Heart right ventricle (tissue), 16 donors: ENCODE measurements at regions of chr2 and their contacts with region 1.

Region 1: GRCh38 chr2:68943581-68944568 is 8.8 kb downstream of the GKN2 start:
- DNase-seq: peak; percentile 15 to 58
- ATAC-seq: peak; percentile 16 to 80 (median 74)
- H3K4me3 ChIP-seq: no peak overlapping the region
- H3K27ac ChIP-seq: no peak overlapping the region
- H3K4me1 ChIP-seq: peaks cover 0 to 10% (median 0%) of the 10 kb centered on the region in 9 donors
- H3K27me3 ChIP-seq: peaks cover 0 to 10% (median 3%) of the 10 kb centered on the region in 7 donors
- CTCF ChIP-seq: peak; percentile 63 to 88 (median 84)

Region 2: GRCh38 chr2:68548396-68548795 is 395.5 kb before region 1 on chr2:
- intact Hi-C with region 1: no loop called
- DNase-seq: no peak
- ATAC-seq: no peak
- H3K4me3 ChIP-seq: no peak overlapping the region
- H3K27ac ChIP-seq: no peak overlapping the region
- H3K4me1 ChIP-seq: no peaks in the 10 kb centered on the region
- H3K27me3 ChIP-seq: no peaks in the 10 kb centered on the region
- CTCF ChIP-seq: no peak

Region 3: GRCh38 chr2:69012310-69013141 is 68.7 kb after region 1 on chr2:
- intact Hi-C with region 1: loop called in 1 of 10 experiments (anchors 5 kb)
- DNase-seq: peak; percentile 74 to 75
- ATAC-seq: peak; percentile 66 to 78 (median 74)
- H3K4me3 ChIP-seq: peak overlapping the region; percentile 53 to 89 (median 74)
- H3K27ac ChIP-seq: peak overlapping the region in 8 of 10 donors; percentile 56 to 86 (median 79)
- H3K4me1 ChIP-seq: peaks cover 0 to 32% (median 21%) of the 10 kb centered on the region in 9 donors
- H3K27me3 ChIP-seq: peaks cover 0 to 61% (median 38%) of the 10 kb centered on the region in 7 donors
- CTCF ChIP-seq: peak; percentile 56 to 83 (median 72)

Region 4: DNA sequence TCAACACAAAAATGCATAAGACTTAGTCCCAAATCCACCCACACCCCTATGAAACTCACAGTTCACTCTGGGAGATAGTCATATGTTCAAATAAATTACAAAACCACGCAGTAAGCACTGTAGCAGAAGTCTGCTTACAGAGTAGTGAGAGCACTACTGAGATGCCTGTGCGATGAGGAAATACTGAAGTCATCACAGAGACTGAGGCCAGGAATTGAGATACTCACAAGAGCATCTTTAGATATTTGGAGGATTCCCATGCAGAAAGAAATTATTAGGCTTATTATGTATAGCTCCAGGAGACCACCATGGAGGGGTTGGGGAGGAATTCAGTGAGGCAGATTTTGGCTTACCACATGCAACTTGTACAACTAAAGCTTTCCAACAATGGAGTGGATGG is 151.4 kb after region 1 on chr2:
- intact Hi-C with region 1: loop called in 1 of 10 experiments (anchors 10 kb)
- DNase-seq: peak in 1 of 2 donors; percentile 25
- ATAC-seq: peak in 7 of 8 donors; percentile 58 to 87 (median 80)
- H3K4me3 ChIP-seq: no peak overlapping the region
- H3K27ac ChIP-seq: peak overlapping the region in 5 of 10 donors; percentile 18 to 64 (median 30)
- H3K4me1 ChIP-seq: peaks cover 0 to 66% (median 18%) of the 10 kb centered on the region in 9 donors
- H3K27me3 ChIP-seq: no peaks in the 10 kb centered on the region
- CTCF ChIP-seq: no peak

Region 5: GRCh38 chr2:69138793-69139510 is 195.1 kb after region 1 on chr2:
- intact Hi-C with region 1: no loop called
- DNase-seq: no peak
- ATAC-seq: peak in 5 of 8 donors; percentile 33 to 77 (median 38)
- H3K4me3 ChIP-seq: no peak overlapping the region
- H3K27ac ChIP-seq: peak overlapping the region in 1 of 10 donors; percentile 41
- H3K4me1 ChIP-seq: peaks cover 0 to 16% (median 3%) of the 10 kb centered on the region in 9 donors
- H3K27me3 ChIP-seq: no peaks in the 10 kb centered on the region
- CTCF ChIP-seq: no peak